PC-9 (cell line): ENCODE measurements at regions of chr20 and their contacts with region 1.

Region 1: GRCh38 chr20:47610247-47610944 is 108.7 kb downstream of the NCOA3 start:
- DNase-seq: peak; percentile 35 to 69
- H3K4me3 ChIP-seq: no peak overlapping the region
- H3K27ac ChIP-seq: peak overlapping the region; percentile 73
- H3K4me1 ChIP-seq: peaks cover 50% of the 10 kb centered on the region
- H3K27me3 ChIP-seq: no peaks in the 10 kb centered on the region
- CTCF ChIP-seq: no peak

Region 2: DNA sequence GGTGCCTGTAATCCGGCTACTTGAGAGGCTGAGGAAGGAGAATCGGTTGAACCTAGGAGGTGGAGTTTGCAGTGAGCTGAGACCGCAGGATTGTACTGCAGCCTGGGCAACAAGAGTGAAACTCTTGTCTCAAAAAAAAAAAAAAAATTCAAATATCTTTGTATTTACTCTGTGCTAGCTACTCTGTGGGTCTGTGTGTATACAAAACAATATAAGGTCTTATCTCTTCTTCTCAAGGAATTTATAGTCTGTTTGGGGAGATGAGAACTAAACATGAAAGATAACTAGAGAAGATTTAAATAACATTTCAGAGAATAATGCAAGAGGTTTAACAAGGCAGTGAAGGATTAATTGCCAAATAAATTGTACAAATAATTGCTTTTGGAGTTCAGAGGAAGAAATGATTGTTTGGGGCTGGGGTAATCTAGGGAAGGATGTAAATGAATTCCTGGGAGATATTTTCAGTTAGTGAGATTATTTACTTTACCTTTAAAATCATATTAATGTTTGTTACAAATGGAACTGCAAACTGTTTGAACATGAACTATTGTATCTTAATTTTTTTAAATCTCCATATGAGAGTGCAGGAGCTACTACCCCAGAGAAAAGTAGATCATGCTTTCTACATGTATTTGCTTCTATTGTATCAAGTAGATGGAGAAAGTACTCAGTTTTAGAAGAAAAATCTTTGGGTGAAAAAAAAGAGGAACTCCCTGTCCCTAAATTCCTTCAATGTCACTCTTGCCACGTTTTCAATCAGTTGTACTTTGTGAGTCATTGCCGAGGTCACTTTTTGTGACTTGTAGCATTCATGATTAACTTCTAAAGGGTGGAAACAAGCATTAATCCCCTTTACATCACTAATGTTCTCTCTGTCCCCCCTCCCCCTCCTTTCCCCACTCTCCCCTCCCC is 69.7 kb before region 1 on chr20:
- CTCF ChIA-PET with region 1: interaction called, 3 read pairs
- POLR2A ChIA-PET with region 1: no interaction called
- intact Hi-C with region 1: loop called (anchors 10 kb)
- DNase-seq: peak in 1 of 2 experiments; percentile 62
- H3K4me3 ChIP-seq: no peak overlapping the region
- H3K27ac ChIP-seq: peak overlapping the region; percentile 52
- H3K4me1 ChIP-seq: peaks cover 45% of the 10 kb centered on the region
- H3K27me3 ChIP-seq: no peaks in the 10 kb centered on the region
- CTCF ChIP-seq: no peak

Region 3: DNA sequence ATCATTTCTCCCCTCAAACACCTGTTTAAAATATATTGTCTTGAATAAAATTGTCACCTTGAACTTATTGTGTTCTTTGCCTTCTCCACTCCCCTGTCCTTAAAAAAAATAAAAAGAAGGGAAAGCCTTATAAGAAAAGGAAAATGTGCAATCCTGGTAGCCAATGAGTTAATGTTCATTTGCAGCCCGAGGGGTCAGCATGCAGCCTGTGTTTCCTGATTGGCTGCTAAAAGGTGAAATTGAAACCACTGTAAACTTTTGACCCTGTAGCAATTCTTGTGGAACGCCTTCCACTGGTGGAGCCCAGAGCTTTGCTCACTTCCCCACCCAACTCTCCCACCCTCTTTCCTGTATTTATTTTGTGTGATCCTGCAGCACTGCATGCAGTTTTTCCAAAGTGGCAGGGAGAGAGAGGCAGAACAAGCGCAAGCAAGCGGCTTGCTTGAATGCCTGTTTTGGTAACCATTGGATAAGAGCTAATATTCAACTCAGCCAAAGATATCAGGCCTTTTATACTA is 33.8 kb before region 1 on chr20:
- CTCF ChIA-PET with region 1: interaction called, 3 read pairs
- POLR2A ChIA-PET with region 1: interaction called, 5 read pairs
- intact Hi-C with region 1: loop called (anchors 5 kb)
- DNase-seq: peak; percentile 75 to 89
- H3K4me3 ChIP-seq: peak overlapping the region; percentile 45
- H3K27ac ChIP-seq: peak overlapping the region; percentile 64
- H3K4me1 ChIP-seq: peaks cover 67% of the 10 kb centered on the region
- H3K27me3 ChIP-seq: no peaks in the 10 kb centered on the region
- CTCF ChIP-seq: no peak

Region 4: GRCh38 chr20:47642624-47643023 is 32.2 kb after region 1 on chr20:
- CTCF ChIA-PET with region 1: no interaction called
- POLR2A ChIA-PET with region 1: interaction called, 24 read pairs
- intact Hi-C with region 1: no loop called
- DNase-seq: no peak
- H3K4me3 ChIP-seq: no peak overlapping the region
- H3K27ac ChIP-seq: no peak overlapping the region
- H3K4me1 ChIP-seq: no peaks in the 10 kb centered on the region
- H3K27me3 ChIP-seq: no peaks in the 10 kb centered on the region
- CTCF ChIP-seq: no peak